ENCODE measurements at regions of chr2 and their contacts with region 1.

Region 1: GRCh38 chr2:28894470-28895177 is at the start of gene WDR43:
- DNase-seq: peak; percentile 99
- H3K4me3 ChIP-seq: peak within 1 kb of the TSS; percentile 99
- H3K4me3 Mint-ChIP-seq: peak within 1 kb of the TSS; percentile 100
- H3K27ac Mint-ChIP-seq: peak within 1 kb of the TSS; percentile 99
- H3K4me1 ChIP-seq: peaks cover 13% of the 10 kb centered on the region
- H3K4me1 Mint-ChIP-seq: peaks cover 21% of the 10 kb centered on the region
- H3K27me3 ChIP-seq: no peaks in the 10 kb centered on the region
- H3K27me3 Mint-ChIP-seq: no peaks in the 10 kb centered on the region
- CTCF ChIP-seq: no peak
- total RNA-seq, gene WDR43: 117 and 133 TPM in 2 replicates

Region 2: DNA sequence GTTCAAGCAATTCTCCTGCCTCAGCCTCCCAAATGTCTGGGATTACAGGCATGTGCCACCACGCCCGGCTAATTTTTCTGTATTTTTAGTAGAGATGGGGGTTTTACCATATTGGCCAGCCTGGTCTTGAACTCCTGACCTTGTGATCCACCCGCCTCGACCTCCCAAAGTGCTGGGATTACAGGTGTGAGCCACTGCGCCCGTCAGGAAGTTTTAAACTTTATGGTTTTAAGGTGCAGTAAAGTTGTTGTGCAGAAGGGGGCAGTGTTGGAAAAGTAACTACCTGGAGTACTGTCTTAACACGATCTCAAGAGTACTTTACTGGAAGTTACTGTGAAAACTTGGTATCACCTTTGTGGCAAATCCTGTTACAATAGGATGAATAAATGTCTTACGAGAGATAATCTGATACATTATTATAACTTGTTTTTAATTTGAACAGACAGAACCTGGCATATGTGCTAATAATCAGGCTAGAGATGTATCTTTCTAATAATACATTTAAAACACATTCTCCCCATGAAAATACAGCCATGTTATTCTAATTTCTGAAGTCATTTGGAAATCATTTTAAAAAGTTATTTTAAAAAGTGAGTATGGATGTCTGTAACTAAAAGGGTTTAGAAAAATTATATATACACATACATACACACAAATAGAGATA is 73.2 kb before region 1 on chr2:
- CTCF ChIA-PET with region 1: no interaction called
- POLR2A ChIA-PET with region 1: no interaction called
- intact Hi-C with region 1: loop called (anchors 2 kb)
- DNase-seq: peak; percentile 69 to 87
- H3K4me3 ChIP-seq: no peak overlapping the region
- H3K4me3 Mint-ChIP-seq: no peak overlapping the region
- H3K27ac Mint-ChIP-seq: no peak overlapping the region
- H3K4me1 ChIP-seq: no peaks in the 10 kb centered on the region
- H3K4me1 Mint-ChIP-seq: no peaks in the 10 kb centered on the region
- H3K27me3 ChIP-seq: no peaks in the 10 kb centered on the region
- H3K27me3 Mint-ChIP-seq: no peaks in the 10 kb centered on the region
- CTCF ChIP-seq: peak; percentile 68 to 75

Region 3: DNA sequence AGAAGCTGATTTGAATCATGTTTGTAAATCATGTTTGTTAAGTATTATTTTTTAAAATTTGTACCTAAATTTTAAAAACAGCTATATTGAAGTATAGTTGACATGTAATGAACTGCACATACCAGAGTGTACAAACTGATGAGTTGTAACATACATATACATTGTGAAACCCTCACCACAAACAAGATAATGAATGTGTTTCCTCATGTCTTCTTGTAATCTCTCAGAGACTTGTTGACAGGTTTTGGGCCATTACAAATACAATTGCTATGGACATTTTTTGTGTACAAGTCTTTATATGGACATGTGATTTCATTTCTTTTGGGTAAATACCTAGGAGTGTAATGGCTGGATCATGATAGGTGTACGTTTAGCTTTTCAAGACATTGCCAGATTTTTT is 21.3 kb after region 1 on chr2:
- CTCF ChIA-PET with region 1: no interaction called
- POLR2A ChIA-PET with region 1: interaction called, 11 read pairs
- intact Hi-C with region 1: no loop called
- DNase-seq: no peak
- H3K4me3 ChIP-seq: no peak overlapping the region
- H3K4me3 Mint-ChIP-seq: no peak overlapping the region
- H3K27ac Mint-ChIP-seq: peak overlapping the region; percentile 2
- H3K4me1 ChIP-seq: peaks cover 19% of the 10 kb centered on the region; the same call in 1 of the 2 replicates
- H3K4me1 Mint-ChIP-seq: peaks cover 22% of the 10 kb centered on the region
- H3K27me3 ChIP-seq: no peaks in the 10 kb centered on the region
- H3K27me3 Mint-ChIP-seq: no peaks in the 10 kb centered on the region
- CTCF ChIP-seq: no peak

Measured in Caco-2 (cell line).